Ovary (tissue), 10 donors: ENCODE measurements at regions of chr1 and their contacts with region 1.

Region 1: DNA sequence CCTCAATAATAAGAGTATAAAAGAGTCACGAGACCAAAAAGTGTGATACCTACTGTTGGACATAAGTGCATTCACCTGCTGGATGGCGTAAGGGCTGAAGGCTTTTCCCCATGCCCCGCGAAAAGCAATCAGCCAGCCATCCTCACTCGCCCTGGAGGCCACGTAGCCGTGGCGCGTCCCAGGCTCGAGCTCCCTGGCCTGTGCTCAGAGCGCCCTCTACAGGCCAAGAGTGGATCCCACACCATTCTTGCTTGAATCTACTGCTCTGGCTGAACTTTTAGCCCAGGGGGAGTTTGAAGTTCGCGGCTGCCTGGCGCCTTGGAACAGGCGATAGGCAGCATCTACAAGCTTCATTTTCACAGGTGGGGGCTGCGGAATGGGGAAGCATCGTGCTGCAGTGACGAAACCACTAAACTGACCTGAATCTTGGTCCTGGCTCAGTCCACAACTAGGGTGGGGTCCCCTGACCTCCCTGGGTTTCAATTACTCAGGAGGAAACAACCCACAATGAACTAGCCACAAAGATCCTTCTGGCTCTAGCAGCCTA is 70.3 kb upstream of the SERBP1 start:
- DNase-seq: peak; percentile 76 to 89 (median 85)
- H3K4me3 ChIP-seq: no peak overlapping the region
- H3K27ac ChIP-seq: no peak overlapping the region
- H3K4me1 ChIP-seq: no peaks in the 10 kb centered on the region
- H3K27me3 ChIP-seq: no peaks in the 10 kb centered on the region
- CTCF ChIP-seq: peak; percentile 84 to 98 (median 93)
- EP300 ChIP-seq: no peak
- POLR2A ChIP-seq: no peak

Region 2: GRCh38 chr1:67214420-67215174 is 285.9 kb before region 1 on chr1:
- intact Hi-C with region 1: loop called in 2 of 4 experiments (anchors 5 to 10 kb)
- DNase-seq: no peak
- H3K4me3 ChIP-seq: no peak overlapping the region
- H3K27ac ChIP-seq: no peak overlapping the region
- H3K4me1 ChIP-seq: no peaks in the 10 kb centered on the region
- H3K27me3 ChIP-seq: no peaks in the 10 kb centered on the region
- CTCF ChIP-seq: no peak
- EP300 ChIP-seq: no peak
- POLR2A ChIP-seq: no peak

Region 3: DNA sequence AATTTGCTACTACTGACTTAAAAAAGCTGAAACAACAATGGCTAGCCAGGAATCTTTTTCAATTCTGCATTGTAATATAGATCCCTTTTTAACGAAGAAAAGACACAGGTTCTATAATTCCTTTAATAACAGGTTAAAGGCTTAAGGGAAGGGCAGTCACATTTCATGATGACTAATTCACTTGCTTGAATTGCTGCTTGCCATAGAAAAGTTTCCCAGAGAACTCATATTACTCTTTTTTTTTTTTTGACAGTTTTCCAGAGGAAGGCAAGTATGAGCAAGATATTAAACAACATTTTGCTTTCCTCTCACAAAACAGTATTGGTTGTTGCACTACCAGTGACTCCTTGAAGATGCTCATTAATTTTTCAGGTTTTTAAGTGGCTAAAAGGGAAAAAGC is 273.3 kb before region 1 on chr1:
- intact Hi-C with region 1: loop called in 2 of 4 experiments (anchors 10 kb)
- DNase-seq: no peak
- H3K4me3 ChIP-seq: no peak overlapping the region
- H3K27ac ChIP-seq: no peak overlapping the region
- H3K4me1 ChIP-seq: no peaks in the 10 kb centered on the region
- H3K27me3 ChIP-seq: no peaks in the 10 kb centered on the region
- CTCF ChIP-seq: no peak
- EP300 ChIP-seq: no peak
- POLR2A ChIP-seq: no peak

Region 4: DNA sequence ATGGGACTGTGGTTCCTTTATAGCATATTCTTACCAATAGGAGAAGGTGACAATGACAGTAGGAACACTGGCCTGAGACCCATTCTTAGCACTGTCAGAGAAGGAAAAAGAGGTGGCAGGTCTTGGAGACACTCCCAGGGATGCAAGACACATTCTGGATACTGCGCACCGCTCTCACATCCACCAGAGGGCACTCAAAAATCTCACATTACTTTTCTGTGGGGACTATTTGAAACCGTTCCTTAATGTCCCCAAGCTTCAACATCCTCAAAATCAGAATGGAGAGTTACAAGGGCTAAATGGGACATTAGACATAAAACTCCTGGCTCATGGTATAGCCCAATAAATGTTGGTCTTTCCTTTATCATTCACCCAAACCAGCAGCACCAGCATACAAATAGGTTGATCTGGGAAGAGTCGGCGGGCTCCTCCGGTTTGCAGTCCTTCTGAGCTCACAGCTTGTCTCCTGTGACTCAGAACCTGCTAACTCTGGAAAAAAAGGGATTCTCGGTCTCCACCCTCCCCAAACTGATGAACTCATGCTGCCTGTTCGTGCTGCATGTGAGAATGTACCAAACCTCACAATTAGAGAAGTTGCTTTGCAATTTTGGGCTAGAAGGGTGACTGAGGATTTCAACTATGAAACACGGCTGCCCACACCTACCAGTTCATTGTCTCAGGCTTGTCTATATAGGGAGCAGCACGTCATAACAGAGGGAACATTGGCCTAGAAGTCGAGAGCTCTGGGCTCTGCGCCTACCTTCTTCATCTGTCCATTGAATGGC is 152.6 kb before region 1 on chr1:
- intact Hi-C with region 1: loop called in 3 of 4 experiments (anchors 2 to 5 kb)
- DNase-seq: peak; percentile 10 to 47 (median 33)
- H3K4me3 ChIP-seq: no peak overlapping the region
- H3K27ac ChIP-seq: no peak overlapping the region
- H3K4me1 ChIP-seq: peaks cover 2% of the 10 kb centered on the region
- H3K27me3 ChIP-seq: no peaks in the 10 kb centered on the region
- CTCF ChIP-seq: peak; percentile 28 to 32 (median 29)
- EP300 ChIP-seq: no peak
- POLR2A ChIP-seq: no peak

Region 5: GRCh38 chr1:67570473-67571143 is 70.1 kb after region 1 on chr1:
- intact Hi-C with region 1: no loop called
- DNase-seq: no peak
- H3K4me3 ChIP-seq: no peak overlapping the region
- H3K27ac ChIP-seq: no peak overlapping the region
- H3K4me1 ChIP-seq: peaks cover 6% of the 10 kb centered on the region
- H3K27me3 ChIP-seq: no peaks in the 10 kb centered on the region
- CTCF ChIP-seq: no peak
- EP300 ChIP-seq: no peak
- POLR2A ChIP-seq: no peak